Endothelial cell of umbilical vein (primary cell): ENCODE measurements at regions of chrX and their contacts with region 1.

Region 1: GRCh38 chrX:135421537-135421931 is 210 bp upstream of the SMIM10L2A start:
- DNase-seq: peak; percentile 76
- H3K4me3 ChIP-seq: peak overlapping the region in 1 of 3 experiments; percentile 34
- H3K27ac ChIP-seq: no peak overlapping the region
- H3K4me1 ChIP-seq: no peaks in the 10 kb centered on the region
- H3K27me3 ChIP-seq: peaks cover 0 to 2% of the 10 kb centered on the region in 2 experiments
- CTCF ChIP-seq: no peak
- POLR2A ChIP-seq: no peak

Region 2: GRCh38 chrX:135345107-135345589 is 76.4 kb before region 1 on chrX:
- CTCF ChIA-PET with region 1: interaction called, 3 read pairs
- POLR2A ChIA-PET with region 1: interaction called, 4 read pairs
- dilution Hi-C with region 1: no loop called
- intact Hi-C with region 1: loop called (anchors 1 kb)
- DNase-seq: peak; percentile 81
- H3K4me3 ChIP-seq: peak overlapping the region; percentile 48 to 88 (median 64)
- H3K27ac ChIP-seq: peak overlapping the region; percentile 96
- H3K4me1 ChIP-seq: peaks cover 18% of the 10 kb centered on the region
- H3K27me3 ChIP-seq: no peaks in the 10 kb centered on the region
- CTCF ChIP-seq: no peak
- POLR2A ChIP-seq: no peak

Region 3: DNA sequence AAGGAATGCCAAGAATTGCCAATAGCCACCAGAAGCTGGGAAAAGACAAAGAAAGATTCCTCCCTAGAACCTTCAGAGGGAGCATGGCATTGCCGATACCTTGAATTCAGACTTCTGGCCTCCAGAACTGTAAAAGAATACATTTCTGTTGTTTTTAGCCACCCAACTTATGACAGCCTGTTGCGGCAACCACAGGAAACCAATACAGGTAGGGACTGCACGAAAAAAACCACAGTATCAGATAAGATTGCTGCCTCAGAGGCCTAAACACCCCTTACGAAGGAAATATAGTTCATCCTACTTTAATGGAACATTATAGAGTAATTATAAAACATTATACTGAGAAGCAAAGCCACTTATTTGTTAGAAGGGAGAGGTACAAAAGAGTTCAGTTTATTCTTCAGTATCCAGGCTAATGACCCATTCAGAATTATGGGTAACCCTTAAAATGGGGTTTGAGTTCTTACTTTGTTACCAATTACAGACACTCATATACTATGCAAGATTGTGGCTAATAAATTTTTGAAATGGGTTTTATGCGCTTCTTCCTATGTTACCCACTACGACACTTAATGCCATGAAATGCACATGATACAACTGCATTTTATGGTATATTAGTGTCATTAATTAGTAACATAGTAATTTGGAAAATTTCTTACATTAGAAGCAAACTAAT is 37.2 kb before region 1 on chrX:
- CTCF ChIA-PET with region 1: no interaction called
- POLR2A ChIA-PET with region 1: no interaction called
- dilution Hi-C with region 1: no loop called
- intact Hi-C with region 1: loop called (anchors 5 kb)
- DNase-seq: no peak
- H3K4me3 ChIP-seq: no peak overlapping the region
- H3K27ac ChIP-seq: no peak overlapping the region
- H3K4me1 ChIP-seq: peaks cover 20% of the 10 kb centered on the region
- H3K27me3 ChIP-seq: no peaks in the 10 kb centered on the region
- CTCF ChIP-seq: no peak
- POLR2A ChIP-seq: no peak